ENCODE measurements at regions of chr11 and their contacts with region 1.

Region 1: GRCh38 chr11:33808228-33808828 is 34.0 kb upstream of the FBXO3 start:
- DNase-seq: peak; percentile 91
- H3K4me3 ChIP-seq: no peak overlapping the region
- H3K27ac ChIP-seq: no peak overlapping the region
- H3K4me1 ChIP-seq: no peaks in the 10 kb centered on the region
- H3K27me3 ChIP-seq: no peaks in the 10 kb centered on the region
- CTCF ChIP-seq: peak; percentile 79 to 91 (median 86)
- EP300 ChIP-seq: no peak
- POLR2A ChIP-seq: no peak

Region 2: GRCh38 chr11:33642461-33643166 is 165.7 kb before region 1 on chr11:
- intact Hi-C with region 1: no loop called
- DNase-seq: no peak
- H3K4me3 ChIP-seq: no peak overlapping the region
- H3K27ac ChIP-seq: no peak overlapping the region
- H3K4me1 ChIP-seq: no peaks in the 10 kb centered on the region
- H3K27me3 ChIP-seq: no peaks in the 10 kb centered on the region
- CTCF ChIP-seq: no peak
- EP300 ChIP-seq: no peak
- POLR2A ChIP-seq: no peak

Region 3: GRCh38 chr11:33829433-33830141 is 21.3 kb after region 1 on chr11:
- intact Hi-C with region 1: loop called (anchors 1 kb)
- DNase-seq: no peak
- H3K4me3 ChIP-seq: peak overlapping the region; percentile 16 to 49 (median 42)
- H3K27ac ChIP-seq: no peak overlapping the region
- H3K4me1 ChIP-seq: peaks cover 0 to 9% (median 8%) of the 10 kb centered on the region in 4 donors
- H3K27me3 ChIP-seq: peaks cover 8 to 41% (median 16%) of the 10 kb centered on the region in 3 donors
- CTCF ChIP-seq: peak; percentile 43 to 76 (median 70)
- EP300 ChIP-seq: no peak
- POLR2A ChIP-seq: no peak

Region 4: DNA sequence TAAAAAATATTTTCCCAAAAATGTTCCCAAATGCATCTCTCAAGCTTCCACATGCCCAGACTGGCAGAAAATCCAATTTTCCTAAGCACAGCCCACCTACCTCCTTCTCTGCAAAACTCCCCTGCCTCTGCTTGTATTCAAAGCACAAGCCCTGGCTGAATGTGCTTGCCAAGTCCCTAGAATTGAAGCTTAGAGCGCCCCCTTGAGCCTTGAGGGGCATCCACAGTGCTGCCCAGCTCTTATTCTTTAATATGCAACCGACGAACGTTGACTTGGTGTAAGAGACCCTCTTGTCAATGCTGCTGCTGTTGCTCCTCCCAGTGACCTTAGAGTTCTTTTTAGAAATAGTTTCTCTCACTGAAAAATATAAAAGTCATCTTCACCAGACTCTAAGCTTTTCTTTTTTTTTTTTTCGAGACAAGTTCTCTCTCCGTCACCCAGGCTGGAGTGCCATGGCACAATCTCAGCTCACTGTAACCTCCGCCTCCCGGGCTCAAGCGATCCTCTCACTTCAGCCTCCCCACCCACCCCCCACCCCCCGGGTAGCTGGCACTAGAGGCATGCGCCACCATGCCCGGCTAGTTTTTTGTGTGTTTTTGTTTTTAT is 179.8 kb after region 1 on chr11:
- intact Hi-C with region 1: loop called (anchors 5 kb)
- DNase-seq: peak; percentile 80
- H3K4me3 ChIP-seq: no peak overlapping the region
- H3K27ac ChIP-seq: no peak overlapping the region
- H3K4me1 ChIP-seq: no peaks in the 10 kb centered on the region
- H3K27me3 ChIP-seq: peaks cover 0 to 10% (median 0%) of the 10 kb centered on the region in 3 donors
- CTCF ChIP-seq: peak; percentile 22 to 70 (median 46)
- EP300 ChIP-seq: no peak
- POLR2A ChIP-seq: no peak